Left ventricle myocardium superior (tissue), 1 donor: ENCODE measurements at regions of chr5 and their contacts with region 1.

Region 1: DNA sequence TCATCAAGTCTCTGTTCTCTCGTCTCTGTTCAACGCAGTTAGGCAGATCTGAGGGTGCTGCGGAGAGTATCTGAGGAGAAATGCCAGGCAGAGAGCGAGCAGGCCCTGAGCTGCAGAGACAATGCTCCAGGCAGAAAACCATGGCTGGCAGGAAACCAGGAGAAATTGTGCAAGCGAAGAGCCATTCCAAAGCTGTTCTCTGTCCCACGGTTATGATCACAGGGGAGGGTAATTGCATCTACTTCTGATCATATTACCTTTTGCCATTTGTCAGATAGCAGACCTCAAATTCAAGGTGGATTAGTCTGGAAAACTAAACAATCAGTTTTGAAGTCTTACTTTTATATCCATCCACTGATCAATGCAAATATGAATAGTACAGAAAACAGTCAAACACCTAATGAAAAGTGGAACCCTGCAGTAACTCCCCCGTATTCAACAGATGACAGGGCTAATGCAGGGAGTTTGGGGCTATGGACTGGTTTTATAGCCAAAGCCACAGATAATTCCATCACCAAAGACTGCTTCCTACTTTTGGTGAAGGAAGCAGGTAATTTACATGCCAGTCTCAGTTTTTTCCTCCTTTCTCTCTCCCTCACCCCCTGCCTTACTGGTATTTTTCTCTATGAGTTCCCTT is 228.0 kb downstream of the DCP2 start:
- DNase-seq: peak; percentile 63
- ATAC-seq: peak; percentile 70

Region 2: GRCh38 chr5:113070901-113071300 is 133.7 kb before region 1 on chr5:
- intact Hi-C with region 1: no loop called
- DNase-seq: no peak
- ATAC-seq: no peak

Region 3: GRCh38 chr5:113081881-113082546 is 122.6 kb before region 1 on chr5:
- intact Hi-C with region 1: loop called (anchors 10 kb)
- DNase-seq: no peak
- ATAC-seq: peak; percentile 29

Region 4: GRCh38 chr5:113153512-113154097 is 51.0 kb before region 1 on chr5:
- intact Hi-C with region 1: no loop called
- DNase-seq: no peak
- ATAC-seq: no peak

Region 5: DNA sequence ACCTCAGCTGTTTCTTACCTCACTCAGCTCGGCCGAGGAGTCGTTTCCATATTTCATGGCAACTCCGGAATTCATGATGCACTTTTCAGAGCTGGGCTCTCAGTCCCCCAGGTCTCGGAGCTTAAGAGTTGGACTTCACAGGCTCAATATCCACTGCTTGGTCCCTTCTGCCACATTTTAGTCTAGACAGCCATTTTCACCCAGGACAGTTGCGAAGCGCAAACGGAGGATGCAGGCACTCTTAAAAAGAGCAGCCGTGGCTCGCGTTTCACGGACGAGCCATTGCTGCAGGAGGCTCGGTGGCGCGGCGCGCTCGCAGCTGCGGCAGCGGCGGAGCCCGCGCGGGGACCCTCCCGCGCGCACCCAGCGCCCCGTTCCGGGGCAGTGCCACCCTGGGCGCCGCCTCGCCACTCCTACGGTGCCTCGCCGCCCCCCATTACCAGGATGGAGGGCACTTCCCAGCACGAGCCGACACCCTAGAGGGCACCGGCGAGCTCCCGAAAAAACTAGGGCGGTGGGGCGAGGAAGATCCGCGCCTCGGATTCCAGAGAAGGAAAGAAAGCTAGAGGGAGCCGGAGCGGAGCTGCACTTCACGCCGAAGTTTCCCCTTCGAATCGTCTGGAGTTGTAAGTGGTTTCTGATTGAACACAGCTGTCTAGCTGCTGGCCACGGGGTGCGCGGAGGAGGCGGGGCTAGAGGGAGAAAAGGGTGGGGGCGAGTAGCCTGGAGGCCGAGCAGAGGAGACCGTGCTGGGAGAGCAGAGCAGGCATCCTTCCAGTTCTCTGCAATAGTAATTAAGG is 89.9 kb after region 1 on chr5:
- intact Hi-C with region 1: loop called (anchors 10 kb)
- DNase-seq: peak; percentile 92
- ATAC-seq: peak; percentile 97